ENCODE measurements at regions of chr3 and their contacts with region 1.

Region 1: GRCh38 chr3:52471371-52472238 is 16.2 kb downstream of the NISCH start:
- DNase-seq: peak in 1 of 2 experiments; percentile 38
- H3K4me3 ChIP-seq: no peak overlapping the region
- H3K4me3 Mint-ChIP-seq: no peak overlapping the region
- H3K27ac Mint-ChIP-seq: no peak overlapping the region
- H3K4me1 ChIP-seq: no peaks in the 10 kb centered on the region
- H3K4me1 Mint-ChIP-seq: no peaks in the 10 kb centered on the region
- H3K27me3 ChIP-seq: no peaks in the 10 kb centered on the region
- H3K27me3 Mint-ChIP-seq: no peaks in the 10 kb centered on the region
- CTCF ChIP-seq: peak; percentile 27 to 50

Region 2: DNA sequence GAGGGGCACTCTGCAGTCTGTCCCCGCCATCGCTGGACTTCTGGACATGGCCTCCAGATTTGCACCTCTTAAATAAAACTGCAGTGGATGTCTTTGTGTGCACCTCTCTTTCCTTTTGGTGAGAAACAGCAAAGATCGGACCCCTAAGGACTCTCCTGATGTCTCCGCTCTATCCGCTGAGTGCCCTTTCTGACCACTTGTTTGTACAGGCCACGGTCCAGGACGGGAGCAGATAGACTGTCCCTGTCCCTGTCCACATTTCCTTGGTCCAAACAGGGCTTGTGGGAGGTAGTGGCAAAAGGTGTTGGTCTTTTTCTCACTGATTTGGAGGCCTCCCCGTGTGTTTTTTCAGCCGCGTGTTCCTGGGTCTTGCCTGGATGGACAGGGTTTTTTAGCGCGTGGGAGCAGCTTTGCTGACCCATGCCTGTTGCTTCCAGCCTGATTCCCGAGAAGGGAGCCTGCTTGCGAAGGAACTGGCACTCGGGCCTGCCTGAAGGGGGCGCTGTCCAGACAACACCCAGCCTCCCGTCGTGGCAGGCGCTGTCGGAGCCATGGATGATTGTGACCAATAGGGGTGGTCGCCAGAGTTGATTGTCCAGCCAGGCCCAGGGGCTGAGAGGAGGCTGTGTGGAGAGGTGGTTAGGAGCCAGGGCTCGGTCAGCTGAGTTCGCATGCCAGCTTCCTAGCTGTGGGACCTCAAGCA is 10.4 kb after region 1 on chr3:
- CTCF ChIA-PET with region 1: no interaction called
- POLR2A ChIA-PET with region 1: interaction called, 10 read pairs
- intact Hi-C with region 1: no loop called
- DNase-seq: peak in 1 of 2 experiments; percentile 27
- H3K4me3 ChIP-seq: no peak overlapping the region
- H3K4me3 Mint-ChIP-seq: no peak overlapping the region
- H3K27ac Mint-ChIP-seq: no peak overlapping the region
- H3K4me1 ChIP-seq: no peaks in the 10 kb centered on the region
- H3K4me1 Mint-ChIP-seq: no peaks in the 10 kb centered on the region
- H3K27me3 ChIP-seq: no peaks in the 10 kb centered on the region
- H3K27me3 Mint-ChIP-seq: no peaks in the 10 kb centered on the region
- CTCF ChIP-seq: peak; percentile 35 to 40

Region 3: DNA sequence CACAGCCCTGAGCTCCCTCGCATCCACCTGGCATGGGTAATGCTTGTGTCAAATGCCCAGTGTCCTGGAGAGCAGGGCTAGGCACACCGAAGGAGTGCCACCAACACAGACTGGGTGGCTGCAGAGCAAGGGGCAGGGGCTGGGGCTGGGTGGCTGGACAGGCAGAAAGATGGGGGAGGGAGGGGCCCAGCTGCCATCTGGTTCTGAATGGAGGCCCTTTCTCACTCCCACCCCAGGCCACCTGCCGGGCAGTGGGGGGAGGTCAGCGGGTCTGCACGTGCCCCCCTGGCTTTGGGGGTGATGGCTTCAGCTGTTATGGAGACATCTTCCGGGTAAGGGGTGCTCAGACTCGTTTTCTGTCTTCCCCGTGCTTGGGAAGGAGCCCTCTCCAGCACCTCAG is 40.5 kb after region 1 on chr3:
- CTCF ChIA-PET with region 1: no interaction called
- POLR2A ChIA-PET with region 1: no interaction called
- intact Hi-C with region 1: no loop called
- DNase-seq: no peak
- H3K4me3 ChIP-seq: no peak overlapping the region
- H3K4me3 Mint-ChIP-seq: no peak overlapping the region
- H3K27ac Mint-ChIP-seq: no peak overlapping the region
- H3K4me1 ChIP-seq: no peaks in the 10 kb centered on the region
- H3K4me1 Mint-ChIP-seq: peaks cover 5% of the 10 kb centered on the region
- H3K27me3 ChIP-seq: no peaks in the 10 kb centered on the region
- H3K27me3 Mint-ChIP-seq: peaks cover 2% of the 10 kb centered on the region
- CTCF ChIP-seq: no peak

Region 4: GRCh38 chr3:52536369-52537164 is 65.0 kb after region 1 on chr3 and contains the start of gene UQCC5:
- CTCF ChIA-PET with region 1: no interaction called
- POLR2A ChIA-PET with region 1: no interaction called
- intact Hi-C with region 1: no loop called
- DNase-seq: peak; percentile 98
- H3K4me3 ChIP-seq: peak within 1 kb of the TSS; percentile 82
- H3K4me3 Mint-ChIP-seq: peak within 1 kb of the TSS; percentile 98
- H3K27ac Mint-ChIP-seq: peak within 1 kb of the TSS; percentile 97
- H3K4me1 ChIP-seq: peaks cover 28% of the 10 kb centered on the region; the same call in 1 of the 2 replicates
- H3K4me1 Mint-ChIP-seq: peaks cover 32% of the 10 kb centered on the region
- H3K27me3 ChIP-seq: no peaks in the 10 kb centered on the region
- H3K27me3 Mint-ChIP-seq: no peaks in the 10 kb centered on the region
- CTCF ChIP-seq: no peak
- total RNA-seq, gene UQCC5: 35.0 and 38.6 TPM in 2 replicates